Naive thymus-derived CD4-positive, alpha-beta T cell (primary cell): ENCODE measurements at regions of chr15 and their contacts with region 1.

Region 1: GRCh38 chr15:63157118-63157843 is at the start of gene RPS27L:
- DNase-seq: peak; percentile 72 to 89 (median 84)
- ATAC-seq: peak; percentile 97
- H3K4me3 ChIP-seq: peak within 1 kb of the TSS; percentile 100
- H3K4me3 Mint-ChIP-seq: peak within 1 kb of the TSS; percentile 89 to 100 (median 98)
- H3K27ac ChIP-seq: peak within 1 kb of the TSS; percentile 86
- H3K27ac Mint-ChIP-seq: peak within 1 kb of the TSS; percentile 93 to 99 (median 97)
- H3K4me1 ChIP-seq: peaks cover 10 to 11% of the 10 kb centered on the region in 2 donors
- H3K4me1 Mint-ChIP-seq: peaks cover 4 to 37% (median 25%) of the 10 kb centered on the region in 7 donors
- H3K27me3 ChIP-seq: no peaks in the 10 kb centered on the region
- H3K27me3 Mint-ChIP-seq: no peaks in the 10 kb centered on the region
- total RNA-seq, gene RPS27L: 38.7 to 248 (median 111) TPM

Region 2: DNA sequence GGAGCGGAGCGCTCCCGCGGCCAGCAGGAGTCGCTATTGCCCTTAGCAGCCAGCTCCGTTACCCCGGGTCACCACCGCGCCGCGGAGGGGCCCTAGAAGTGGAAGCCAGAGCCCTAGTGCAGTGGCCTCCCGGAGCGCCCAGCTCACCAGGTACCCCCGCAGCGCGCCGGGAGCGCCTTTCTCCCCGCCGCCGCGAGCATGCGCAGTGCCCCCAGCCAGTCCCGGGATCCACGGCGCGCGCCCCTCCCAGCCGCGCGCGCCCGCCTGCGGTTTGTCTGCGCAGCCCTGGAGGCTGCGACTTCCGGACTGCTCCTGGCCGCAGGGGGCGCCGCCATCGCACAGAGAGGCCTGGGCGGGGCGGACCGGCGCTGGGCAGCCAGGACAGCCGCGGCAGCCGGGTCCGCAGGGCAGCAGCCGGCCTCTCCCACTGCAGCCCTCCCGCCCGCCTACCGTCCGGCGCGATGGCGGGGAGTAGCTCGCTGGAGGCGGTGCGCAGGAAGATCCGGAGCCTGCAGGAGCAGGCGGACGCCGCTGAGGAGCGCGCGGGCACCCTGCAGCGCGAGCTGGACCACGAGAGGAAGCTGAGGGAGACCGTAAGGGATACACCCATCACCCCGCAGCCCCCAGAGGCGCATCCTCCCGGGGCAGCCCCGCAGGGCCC is 109.0 kb before region 1 on chr15:
- CTCF ChIA-PET with region 1: interaction called, 3 read pairs
- POLR2A ChIA-PET with region 1: interaction called, 8 read pairs
- intact Hi-C with region 1: loop called (anchors 1 to 2 kb)
- DNase-seq: peak; percentile 72 to 90 (median 85)
- ATAC-seq: peak; percentile 92
- H3K4me3 ChIP-seq: peak overlapping the region; percentile 76
- H3K4me3 Mint-ChIP-seq: peak overlapping the region; percentile 84 to 97 (median 94)
- H3K27ac ChIP-seq: peak overlapping the region; percentile 59
- H3K27ac Mint-ChIP-seq: peak overlapping the region; percentile 25 to 85 (median 68)
- H3K4me1 ChIP-seq: peaks cover 7 to 16% of the 10 kb centered on the region in 2 donors
- H3K4me1 Mint-ChIP-seq: peaks cover 13 to 42% (median 26%) of the 10 kb centered on the region in 7 donors
- H3K27me3 ChIP-seq: peaks cover 17 to 27% of the 10 kb centered on the region in 2 donors
- H3K27me3 Mint-ChIP-seq: peaks cover 30 to 60% (median 36%) of the 10 kb centered on the region in 5 donors

Region 3: GRCh38 chr15:63146669-63147068 is 10.6 kb before region 1 on chr15:
- CTCF ChIA-PET with region 1: interaction called, 4 read pairs
- POLR2A ChIA-PET with region 1: interaction called, 6 read pairs
- intact Hi-C with region 1: loop called in 1 of 2 experiments (anchors 2 kb)
- DNase-seq: no peak
- ATAC-seq: no peak
- H3K4me3 ChIP-seq: no peak overlapping the region
- H3K4me3 Mint-ChIP-seq: no peak overlapping the region
- H3K27ac ChIP-seq: no peak overlapping the region
- H3K27ac Mint-ChIP-seq: peak overlapping the region in 4 of 9 donors; percentile 14 to 74 (median 46)
- H3K4me1 ChIP-seq: no peaks in the 10 kb centered on the region
- H3K4me1 Mint-ChIP-seq: peaks cover 0 to 14% (median 8%) of the 10 kb centered on the region in 7 donors
- H3K27me3 ChIP-seq: no peaks in the 10 kb centered on the region
- H3K27me3 Mint-ChIP-seq: no peaks in the 10 kb centered on the region

Region 4: DNA sequence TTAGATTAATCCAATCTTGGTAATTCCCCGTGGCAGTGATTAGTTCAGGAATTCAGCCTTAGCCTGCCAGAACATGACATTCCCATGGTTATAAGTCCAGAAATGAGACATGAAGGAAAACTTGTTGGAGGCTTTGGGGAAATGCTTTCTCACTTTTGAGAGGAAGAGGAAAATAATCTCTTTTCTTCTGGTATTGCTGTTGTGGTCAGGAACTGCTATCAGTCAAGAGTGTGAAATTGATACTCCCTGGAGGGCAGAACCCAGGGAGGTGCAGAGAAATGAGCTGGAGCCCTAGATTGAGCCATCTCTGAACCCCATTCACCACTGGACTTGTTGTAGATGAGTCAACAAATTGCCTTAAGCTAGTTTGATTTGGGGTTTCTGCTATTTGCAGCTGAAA is 81.5 kb after region 1 on chr15:
- CTCF ChIA-PET with region 1: no interaction called
- POLR2A ChIA-PET with region 1: interaction called, 6 read pairs
- intact Hi-C with region 1: loop called in 1 of 2 experiments (anchors 5 kb)
- DNase-seq: no peak
- ATAC-seq: peak; percentile 46
- H3K4me3 ChIP-seq: no peak overlapping the region
- H3K4me3 Mint-ChIP-seq: no peak overlapping the region
- H3K27ac ChIP-seq: no peak overlapping the region
- H3K27ac Mint-ChIP-seq: peak overlapping the region in 1 of 9 donors; percentile 59
- H3K4me1 ChIP-seq: peaks cover 19 to 35% of the 10 kb centered on the region in 2 donors
- H3K4me1 Mint-ChIP-seq: peaks cover 44 to 90% (median 74%) of the 10 kb centered on the region in 7 donors
- H3K27me3 ChIP-seq: no peaks in the 10 kb centered on the region
- H3K27me3 Mint-ChIP-seq: no peaks in the 10 kb centered on the region

Region 5: GRCh38 chr15:63288778-63289378 is 131.6 kb after region 1 on chr15:
- CTCF ChIA-PET with region 1: no interaction called
- POLR2A ChIA-PET with region 1: no interaction called
- intact Hi-C with region 1: loop called in 1 of 2 experiments (anchors 1 kb)
- DNase-seq: peak in 7 of 9 donors; percentile 30 to 68 (median 52)
- ATAC-seq: peak; percentile 79
- H3K4me3 ChIP-seq: no peak overlapping the region
- H3K4me3 Mint-ChIP-seq: peak overlapping the region in 1 of 10 donors; percentile 6
- H3K27ac ChIP-seq: no peak overlapping the region
- H3K27ac Mint-ChIP-seq: peak overlapping the region in 4 of 9 donors; percentile 12 to 64 (median 59)
- H3K4me1 ChIP-seq: no peaks in the 10 kb centered on the region
- H3K4me1 Mint-ChIP-seq: peaks cover 5 to 10% (median 7%) of the 10 kb centered on the region in 7 donors
- H3K27me3 ChIP-seq: no peaks in the 10 kb centered on the region
- H3K27me3 Mint-ChIP-seq: no peaks in the 10 kb centered on the region